CD4-positive, alpha-beta memory T cell (primary cell): ENCODE measurements at regions of chr2 and their contacts with region 1.

Region 1: DNA sequence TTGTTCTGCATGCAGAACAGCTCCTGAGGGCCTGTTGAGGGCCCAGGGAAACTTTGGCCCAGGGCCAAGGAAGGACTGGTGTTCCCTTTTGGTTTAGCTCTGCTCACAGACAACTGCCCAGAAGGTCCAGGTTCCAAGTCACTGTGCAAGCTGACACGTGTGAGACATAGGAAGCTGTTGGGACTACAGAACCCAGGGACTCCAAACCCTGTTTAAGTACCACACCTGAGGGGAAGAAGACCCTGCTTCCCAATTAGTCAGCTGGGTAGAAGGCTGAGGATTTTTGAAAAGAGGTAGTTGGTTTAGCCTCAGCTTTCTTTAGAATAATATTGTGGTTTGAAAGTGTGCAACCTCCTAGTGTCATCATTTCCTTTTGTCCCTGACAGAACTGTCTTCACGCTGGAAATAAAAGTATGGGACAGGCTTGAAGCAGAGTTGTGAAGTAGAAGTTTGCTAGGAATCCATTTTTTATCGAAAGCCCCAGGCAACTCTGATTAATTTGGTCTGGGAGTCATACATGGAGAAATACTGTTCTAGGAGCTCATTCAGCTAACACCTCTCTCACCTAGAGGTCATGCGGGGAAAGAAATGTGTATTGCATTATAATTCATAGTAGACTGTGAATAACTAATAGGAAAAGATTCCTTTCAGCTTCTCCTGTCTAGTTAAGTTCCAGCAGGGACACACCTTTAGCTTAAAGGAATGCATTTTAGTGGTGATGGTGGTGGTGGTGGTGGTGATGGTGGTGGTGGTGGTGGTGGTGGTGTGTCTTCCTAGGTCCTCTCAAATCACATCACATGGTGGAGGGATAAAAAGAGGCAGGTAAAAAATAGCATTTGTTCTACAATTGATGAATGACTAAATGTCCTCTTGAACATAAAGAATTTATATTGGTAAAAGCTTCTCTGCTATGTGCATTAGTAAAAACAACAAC is 19.8 kb upstream of the IL1RL1 start:
- DNase-seq: no peak
- H3K4me3 ChIP-seq: no peak overlapping the region
- H3K4me3 Mint-ChIP-seq: no peak overlapping the region
- H3K27ac ChIP-seq: no peak overlapping the region
- H3K27ac Mint-ChIP-seq: no peak overlapping the region
- H3K4me1 ChIP-seq: no peaks in the 10 kb centered on the region
- H3K4me1 Mint-ChIP-seq: peaks cover 0 to 5% (median 2%) of the 10 kb centered on the region in 4 donors
- H3K27me3 ChIP-seq: no peaks in the 10 kb centered on the region
- H3K27me3 Mint-ChIP-seq: peaks cover 1 to 2% of the 10 kb centered on the region in 2 donors

Region 2: GRCh38 chr2:102301867-102302362 is 10.3 kb after region 1 on chr2:
- CTCF ChIA-PET with region 1: interaction called, 12 read pairs
- POLR2A ChIA-PET with region 1: interaction called, 3 read pairs
- intact Hi-C with region 1: no loop called
- DNase-seq: peak; percentile 33 to 60 (median 40)
- H3K4me3 ChIP-seq: no peak overlapping the region
- H3K4me3 Mint-ChIP-seq: peak overlapping the region in 6 of 8 donors; percentile 11 to 77 (median 50)
- H3K27ac ChIP-seq: no peak overlapping the region
- H3K27ac Mint-ChIP-seq: peak overlapping the region in 2 of 7 donors; percentile 43 to 54
- H3K4me1 ChIP-seq: peaks cover 12% of the 10 kb centered on the region
- H3K4me1 Mint-ChIP-seq: peaks cover 13 to 18% (median 15%) of the 10 kb centered on the region in 4 donors
- H3K27me3 ChIP-seq: no peaks in the 10 kb centered on the region
- H3K27me3 Mint-ChIP-seq: peaks cover 3 to 5% of the 10 kb centered on the region in 2 donors